ENCODE measurements at regions of chr11 and their contacts with region 1.

Region 1: DNA sequence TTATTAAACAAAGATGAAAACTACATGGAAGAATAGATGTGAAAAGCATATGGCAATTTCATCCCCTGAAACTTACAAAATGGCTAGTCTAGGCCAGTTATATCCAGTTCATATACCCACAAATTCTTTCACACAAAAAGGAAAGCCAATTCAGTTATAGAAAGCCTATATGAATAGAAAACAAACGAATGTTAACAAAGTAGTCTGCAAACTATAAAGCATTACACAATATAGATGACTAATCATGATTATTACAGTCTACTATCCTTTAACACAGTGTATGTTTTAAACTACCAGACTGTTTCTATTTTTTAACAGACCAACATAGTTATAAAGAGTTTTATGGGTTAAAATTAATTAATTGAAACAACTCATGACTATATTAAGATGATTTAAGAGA is 12.1 kb downstream of the DCUN1D5 start:
- DNase-seq: peak; percentile 42
- H3K4me3 Mint-ChIP-seq: no peak overlapping the region
- H3K27ac Mint-ChIP-seq: no peak overlapping the region
- H3K4me1 Mint-ChIP-seq: peaks cover 11% of the 10 kb centered on the region
- H3K27me3 Mint-ChIP-seq: no peaks in the 10 kb centered on the region
- CTCF ChIP-seq: no peak

Region 2: GRCh38 chr11:103091801-103092524 is 12.1 kb after region 1 on chr11 and contains the start of gene DCUN1D5:
- CTCF ChIA-PET with region 1: no interaction called
- POLR2A ChIA-PET with region 1: interaction called, 12 read pairs
- intact Hi-C with region 1: no loop called
- DNase-seq: peak; percentile 95
- H3K4me3 Mint-ChIP-seq: peak within 1 kb of the TSS; percentile 79
- H3K27ac Mint-ChIP-seq: peak within 1 kb of the TSS; percentile 92
- H3K4me1 Mint-ChIP-seq: peaks cover 14% of the 10 kb centered on the region
- H3K27me3 Mint-ChIP-seq: no peaks in the 10 kb centered on the region
- CTCF ChIP-seq: no peak
- total RNA-seq, gene DCUN1D5: 53.8 and 87.4 TPM in 2 replicates

Measured in MCF 10A (cell line).